Activated B cell treated with CpG ODN at 0.5 μM for 24 hours (primary cell): ENCODE measurements at regions of chr19 and their contacts with region 1.

Region 1: DNA sequence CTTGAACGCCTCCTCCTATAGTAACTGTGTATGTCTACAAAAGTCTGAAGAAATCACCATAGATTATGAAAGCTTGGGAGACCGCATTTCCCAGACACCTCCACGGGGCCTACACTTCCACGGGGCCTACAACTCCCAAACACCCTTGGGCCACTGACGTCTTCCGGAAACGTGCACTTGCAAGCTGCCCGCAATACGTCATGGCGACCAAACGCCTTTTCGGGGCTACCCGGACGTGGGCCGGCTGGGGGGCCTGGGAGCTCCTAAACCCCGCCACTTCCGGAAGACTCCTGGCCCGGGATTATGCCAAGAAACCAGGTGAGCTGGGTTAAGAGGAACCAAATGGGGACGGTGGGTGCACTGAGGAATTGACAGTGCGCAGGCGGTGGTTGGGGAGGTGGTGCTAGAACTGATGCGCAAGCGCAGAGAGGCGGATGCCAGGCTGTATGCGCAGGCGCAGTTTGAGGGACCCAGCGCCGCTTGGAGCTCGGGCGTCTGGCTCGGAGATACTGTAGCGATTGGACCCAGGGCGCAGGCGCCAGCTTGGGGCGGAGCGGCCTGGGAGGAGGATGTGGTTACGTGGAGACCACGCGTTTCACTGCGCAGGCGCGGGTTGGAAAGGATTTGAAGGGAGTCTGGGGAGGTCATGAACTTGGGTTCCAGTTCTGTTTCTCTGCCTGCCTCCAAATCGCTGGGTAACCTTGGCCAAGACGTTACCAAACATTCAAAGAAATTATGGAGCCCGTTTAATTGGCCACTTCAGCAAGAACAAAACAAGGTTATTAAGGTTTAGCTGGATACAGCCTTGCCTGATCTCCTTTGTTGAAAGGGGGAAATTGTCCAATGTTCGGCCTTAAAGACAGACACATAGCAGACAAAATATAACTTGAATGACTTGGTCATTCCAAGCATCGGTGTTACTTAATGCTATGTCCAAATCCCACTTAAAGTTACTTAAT is at the start of gene MRPL54:
- DNase-seq: peak; percentile 99
- ATAC-seq: peak; percentile 81
- H3K4me3 Mint-ChIP-seq: peak within 1 kb of the TSS; percentile 96
- H3K27ac Mint-ChIP-seq: peak within 1 kb of the TSS; percentile 100
- H3K4me1 Mint-ChIP-seq: peaks cover 43% of the 10 kb centered on the region
- H3K27me3 Mint-ChIP-seq: no peaks in the 10 kb centered on the region
- CTCF ChIP-seq: no peak
- total RNA-seq, gene MRPL54: 81.2 and 90.0 TPM in 2 replicates

Region 2: DNA sequence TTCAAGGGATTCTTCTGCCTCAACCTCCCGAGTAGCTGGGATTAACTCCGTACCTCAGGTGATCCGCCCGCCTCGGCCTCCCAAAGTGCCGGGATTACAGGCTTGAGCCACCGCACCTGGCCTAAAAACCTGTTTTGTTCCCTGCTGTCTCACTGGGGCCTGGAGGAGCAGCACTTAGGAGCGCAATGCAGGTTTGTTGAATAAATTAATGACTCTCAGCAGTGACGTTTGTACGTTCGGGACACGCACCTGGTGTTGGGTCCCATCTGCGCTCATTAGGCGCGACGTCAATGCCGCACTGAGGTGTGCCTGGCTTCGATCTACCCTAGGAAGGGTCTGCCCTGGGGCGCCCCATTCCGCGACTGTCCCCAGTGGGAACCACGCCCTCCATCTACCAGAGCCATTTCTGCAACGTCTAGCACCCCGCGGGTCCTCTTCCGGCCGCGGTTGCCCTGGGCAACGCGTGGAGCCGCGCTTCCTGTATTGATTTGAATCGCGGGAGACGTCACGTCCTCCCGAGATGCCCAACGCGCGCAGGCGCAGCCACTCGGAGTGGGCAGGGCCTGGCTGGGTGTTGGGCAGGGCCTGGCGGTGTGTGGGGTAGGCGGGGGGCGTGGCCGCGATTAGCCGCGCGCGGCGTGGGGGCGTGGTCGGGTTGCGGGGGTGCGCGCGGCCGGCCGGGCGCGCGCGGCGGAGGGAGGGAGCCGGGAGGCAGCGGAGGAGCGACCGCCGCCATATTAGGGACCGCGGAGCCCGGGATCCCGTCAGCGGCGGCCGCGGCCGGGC is 257.0 kb before region 1 on chr19 and contains the start of gene FZR1:
- CTCF ChIA-PET with region 1: no interaction called
- POLR2A ChIA-PET with region 1: no interaction called
- intact Hi-C with region 1: loop called (anchors 5 kb)
- DNase-seq: peak; percentile 98
- ATAC-seq: peak; percentile 91
- H3K4me3 Mint-ChIP-seq: peak within 1 kb of the TSS; percentile 91
- H3K27ac Mint-ChIP-seq: peak within 1 kb of the TSS; percentile 96
- H3K4me1 Mint-ChIP-seq: peaks cover 47% of the 10 kb centered on the region
- H3K27me3 Mint-ChIP-seq: no peaks in the 10 kb centered on the region
- CTCF ChIP-seq: no peak
- total RNA-seq, gene FZR1: 53.5 and 66.0 TPM in 2 replicates

Region 3: GRCh38 chr19:3626473-3627350 is 136.1 kb before region 1 on chr19 and contains the start of gene CACTIN:
- CTCF ChIA-PET with region 1: no interaction called
- POLR2A ChIA-PET with region 1: no interaction called
- intact Hi-C with region 1: loop called (anchors 1 kb)
- DNase-seq: peak; percentile 95
- ATAC-seq: peak; percentile 98
- H3K4me3 Mint-ChIP-seq: peak within 1 kb of the TSS; percentile 97
- H3K27ac Mint-ChIP-seq: peak within 1 kb of the TSS; percentile 99
- H3K4me1 Mint-ChIP-seq: peaks cover 30% of the 10 kb centered on the region
- H3K27me3 Mint-ChIP-seq: no peaks in the 10 kb centered on the region
- CTCF ChIP-seq: no peak
- total RNA-seq, gene CACTIN: 45.3 and 48.1 TPM in 2 replicates

Region 4: DNA sequence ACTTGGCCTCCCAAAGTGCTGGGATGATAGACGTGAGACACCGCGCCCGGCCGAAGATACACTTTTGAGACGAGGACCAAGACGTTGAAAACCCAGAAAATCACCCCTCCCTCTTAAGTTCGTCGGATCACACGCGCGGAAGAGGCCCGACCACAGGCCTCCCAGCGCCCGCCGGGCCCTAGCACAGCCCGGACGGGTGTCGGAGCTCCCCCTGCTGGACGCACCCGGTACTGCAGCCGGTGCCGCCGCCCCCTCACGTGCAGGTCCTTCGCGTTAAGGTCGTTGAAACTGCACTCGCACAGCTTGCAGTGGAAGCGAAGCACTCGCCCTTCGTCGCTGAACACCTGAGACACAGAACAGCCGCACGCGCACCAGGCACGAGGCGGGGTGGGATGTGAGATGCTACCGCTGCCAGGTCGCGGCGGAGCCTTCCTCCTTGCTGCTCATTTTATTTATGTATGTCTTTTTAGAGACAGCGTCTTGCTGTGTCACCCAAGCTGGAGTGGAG is 59.1 kb after region 1 on chr19:
- CTCF ChIA-PET with region 1: interaction called, 27 read pairs
- POLR2A ChIA-PET with region 1: interaction called, 37 read pairs
- intact Hi-C with region 1: loop called (anchors 1 kb)
- DNase-seq: peak; percentile 83
- ATAC-seq: peak; percentile 93
- H3K4me3 Mint-ChIP-seq: no peak overlapping the region
- H3K27ac Mint-ChIP-seq: peak overlapping the region; percentile 16
- H3K4me1 Mint-ChIP-seq: peaks cover 15% of the 10 kb centered on the region
- H3K27me3 Mint-ChIP-seq: no peaks in the 10 kb centered on the region
- CTCF ChIP-seq: peak; percentile 66

Region 5: DNA sequence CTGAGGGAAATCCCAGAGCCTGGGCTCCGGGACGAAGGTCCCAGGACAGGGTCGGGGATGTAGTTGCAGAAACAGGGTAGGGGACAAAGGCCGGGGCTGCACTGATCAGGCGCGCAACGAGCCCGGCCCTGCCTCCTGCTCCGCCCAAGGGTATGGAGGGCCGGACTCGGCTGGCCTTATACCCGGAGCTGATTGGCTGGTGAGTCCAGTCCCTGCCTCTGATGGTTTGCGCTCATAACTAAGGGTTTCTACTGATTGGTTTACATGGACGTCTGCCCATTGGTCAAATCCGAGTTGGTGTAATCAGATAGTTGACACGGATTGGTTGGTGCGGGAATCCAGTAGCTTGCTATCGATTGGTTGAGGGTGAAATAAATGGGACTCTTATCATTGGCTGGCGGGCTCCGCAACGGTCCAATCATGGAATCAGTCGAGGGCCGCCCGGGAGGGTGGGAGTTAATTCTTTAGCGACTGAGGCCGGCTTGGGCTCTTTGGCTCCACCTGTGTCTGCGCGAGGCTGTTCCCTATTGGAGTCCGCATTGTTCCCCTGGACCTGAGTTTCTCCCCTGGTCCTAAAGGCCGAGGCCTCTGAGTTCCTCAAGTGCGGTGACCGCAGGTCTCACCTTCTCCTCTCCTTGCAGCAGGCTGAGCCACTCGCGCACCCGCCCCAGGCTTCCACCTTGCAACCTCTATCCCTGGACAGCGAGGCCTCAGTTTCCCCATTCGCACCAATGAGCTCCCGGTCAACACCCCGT is 580.0 kb after region 1 on chr19:
- CTCF ChIA-PET with region 1: no interaction called
- POLR2A ChIA-PET with region 1: interaction called, 7 read pairs
- intact Hi-C with region 1: loop called (anchors 2 kb)
- DNase-seq: peak; percentile 75
- ATAC-seq: peak; percentile 85
- H3K4me3 Mint-ChIP-seq: peak overlapping the region; percentile 91
- H3K27ac Mint-ChIP-seq: peak overlapping the region; percentile 82
- H3K4me1 Mint-ChIP-seq: peaks cover 35% of the 10 kb centered on the region
- H3K27me3 Mint-ChIP-seq: no peaks in the 10 kb centered on the region
- CTCF ChIP-seq: no peak

Region 6: DNA sequence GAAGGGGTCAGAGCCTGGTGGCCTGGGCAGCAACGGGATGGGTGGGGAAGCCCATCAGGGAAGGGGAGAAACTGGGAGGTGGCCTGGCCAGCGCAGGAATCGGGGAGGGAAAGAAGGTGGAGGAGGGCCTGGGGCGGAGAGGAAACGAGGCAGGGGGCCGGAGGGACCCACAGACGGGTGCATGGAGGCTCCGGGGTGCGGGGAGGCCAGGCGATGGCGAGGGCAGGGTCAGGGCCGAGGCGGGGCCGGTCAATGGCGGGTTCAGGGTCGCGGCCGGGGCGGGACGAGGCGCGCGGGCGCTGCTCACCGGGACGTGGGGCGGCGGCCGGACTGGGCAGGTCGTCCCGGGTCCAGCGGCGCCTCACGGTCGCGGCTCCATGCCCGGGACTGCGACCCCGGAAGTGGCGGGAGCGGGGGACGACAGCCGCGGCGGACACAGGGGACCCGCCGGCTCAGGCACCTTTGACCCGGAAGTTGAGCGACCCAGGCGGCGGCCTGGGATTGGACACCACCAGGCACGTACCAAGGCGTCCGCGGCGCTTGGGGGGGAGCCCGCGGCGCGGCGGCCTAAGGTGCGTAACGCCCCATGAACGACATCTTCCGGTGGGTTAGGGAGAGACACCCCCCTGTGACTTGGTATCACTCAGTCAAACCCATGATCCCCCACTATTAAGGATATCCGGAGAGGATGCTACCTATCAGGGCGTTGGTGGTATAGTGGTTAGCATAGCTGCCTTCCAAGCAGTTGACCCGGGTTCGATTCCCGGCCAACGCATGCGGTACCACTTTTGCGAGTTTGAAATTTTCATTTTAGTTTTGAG is 960.8 kb after region 1 on chr19 and contains the start of gene DPP9:
- CTCF ChIA-PET with region 1: no interaction called
- POLR2A ChIA-PET with region 1: no interaction called
- intact Hi-C with region 1: loop called (anchors 5 kb)
- DNase-seq: peak; percentile 92
- ATAC-seq: peak; percentile 94
- H3K4me3 Mint-ChIP-seq: peak within 1 kb of the TSS; percentile 98
- H3K27ac Mint-ChIP-seq: peak within 1 kb of the TSS; percentile 98
- H3K4me1 Mint-ChIP-seq: peaks cover 46% of the 10 kb centered on the region
- H3K27me3 Mint-ChIP-seq: peaks cover 7% of the 10 kb centered on the region
- CTCF ChIP-seq: no peak
- total RNA-seq, gene DPP9: 85.7 and 111 TPM in 2 replicates